H1 (cell line): ENCODE measurements at regions of chr17 and their contacts with region 1.

Region 1: DNA sequence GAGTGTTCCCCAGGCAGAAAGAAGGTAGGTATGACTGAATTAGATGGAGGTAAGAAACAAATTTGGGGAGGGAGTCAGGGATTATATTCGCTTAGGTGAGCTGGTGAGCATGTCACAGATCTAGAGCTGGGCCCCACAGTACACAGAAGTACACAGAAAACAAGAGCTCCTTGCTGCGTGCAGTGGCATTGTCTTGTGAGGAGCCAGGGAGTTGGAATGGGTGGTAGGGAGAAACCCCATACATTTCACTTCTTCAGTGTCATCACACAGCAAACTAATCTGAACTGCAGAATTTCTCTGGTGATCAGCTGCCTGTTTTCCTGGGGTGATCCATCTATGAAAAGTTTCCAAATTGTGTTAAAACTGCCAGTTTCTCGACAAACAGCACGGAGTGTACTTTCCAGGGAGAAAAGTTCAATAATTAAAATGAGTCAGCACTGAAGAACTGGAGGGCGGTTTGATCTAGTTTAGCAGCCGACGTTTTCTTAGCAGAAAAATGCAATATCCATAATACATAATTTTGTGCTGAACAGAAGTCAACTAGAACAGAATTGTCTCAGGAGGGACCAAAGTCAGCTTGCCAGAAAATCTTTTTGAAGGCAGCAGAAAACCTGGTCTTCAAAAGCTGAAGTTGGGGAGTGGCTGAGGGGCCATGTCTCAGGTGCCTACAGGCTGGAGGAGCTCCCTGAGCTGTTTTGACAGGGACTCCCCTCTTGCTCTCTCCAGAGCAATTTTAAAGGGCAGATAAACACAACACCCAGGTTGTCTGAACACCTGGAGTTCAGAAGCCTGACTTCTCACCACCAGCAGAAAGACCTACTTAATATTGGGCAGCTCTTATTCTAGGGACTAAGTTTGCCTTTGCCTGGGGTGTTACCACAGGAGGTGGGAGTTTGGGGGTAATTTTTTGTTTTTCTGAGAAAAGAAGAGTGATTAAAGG is 448.6 kb downstream of the CA10 start:
- DNase-seq: no peak
- H3K4me3 ChIP-seq: no peak overlapping the region
- H3K27ac ChIP-seq: no peak overlapping the region
- H3K4me1 ChIP-seq: no peaks in the 10 kb centered on the region
- H3K27me3 ChIP-seq: no peaks in the 10 kb centered on the region
- CTCF ChIP-seq: no peak
- EP300 ChIP-seq: no peak
- POLR2A ChIP-seq: no peak
- RAD21 ChIP-seq: no peak

Region 2: GRCh38 chr17:51734462-51734861 is 24.5 kb after region 1 on chr17:
- CTCF ChIA-PET with region 1: interaction called, 24 read pairs
- POLR2A ChIA-PET with region 1: no interaction called
- DNase-seq: peak; percentile 19 to 56
- H3K4me3 ChIP-seq: no peak overlapping the region
- H3K27ac ChIP-seq: no peak overlapping the region
- H3K4me1 ChIP-seq: peaks cover 4 to 8% (median 6%) of the 10 kb centered on the region in 4 experiments; a peak in 6 of 7 replicates
- H3K27me3 ChIP-seq: no peaks in the 10 kb centered on the region
- CTCF ChIP-seq: peak; percentile 61 to 75 (median 68)
- EP300 ChIP-seq: no peak
- POLR2A ChIP-seq: no peak
- RAD21 ChIP-seq: peak; percentile 52 to 66